Posterior vena cava (tissue), 2 donors: ENCODE measurements at regions of chr14 and their contacts with region 1.

Region 1: GRCh38 chr14:76272774-76273173 is 103.2 kb upstream of the ESRRB start:
- DNase-seq: no peak

Region 2: DNA sequence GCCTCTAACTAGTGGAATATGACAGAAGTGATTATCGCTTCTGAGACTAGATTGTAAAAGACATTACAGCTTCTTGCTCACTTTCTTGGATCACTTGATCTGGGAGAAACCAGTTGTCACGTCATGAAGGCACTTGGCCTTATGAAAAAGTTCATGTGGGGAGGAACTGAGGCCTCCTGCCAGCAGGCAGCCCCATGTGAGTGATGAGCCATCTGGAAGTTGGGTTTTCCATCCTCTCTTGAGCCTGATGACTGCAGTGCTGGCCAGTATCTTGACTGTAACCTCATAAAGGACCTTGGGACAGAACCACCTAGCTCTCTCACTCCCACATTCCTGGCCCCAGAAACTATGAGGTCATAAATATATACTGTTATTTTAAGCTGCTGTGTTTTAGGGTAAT is 583.8 kb before region 1 on chr14:
- intact Hi-C with region 1: no loop called
- DNase-seq: peak; percentile 86

Region 3: DNA sequence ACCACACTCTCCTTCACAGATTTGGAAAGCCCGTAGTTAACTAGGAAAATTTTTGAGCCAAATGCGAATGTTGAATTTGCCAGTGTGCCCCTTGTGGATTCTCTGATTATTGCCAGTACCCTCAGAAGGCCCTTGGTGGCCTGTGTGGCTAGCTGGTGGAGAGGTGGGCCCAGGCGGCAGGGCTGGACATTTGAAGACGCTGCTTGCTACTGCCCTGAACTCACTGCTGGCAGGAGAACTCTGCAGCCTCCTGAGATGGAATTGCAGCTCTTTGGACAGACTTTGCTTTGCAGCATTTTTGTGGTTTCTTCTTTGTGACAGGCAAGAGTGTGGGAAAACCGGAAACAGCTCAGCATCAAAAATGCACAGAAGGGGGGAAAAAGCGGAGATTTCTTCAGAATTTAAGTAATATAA is 388.6 kb before region 1 on chr14:
- intact Hi-C with region 1: no loop called
- DNase-seq: no peak

Region 4: GRCh38 chr14:76236172-76237130 is 36.3 kb before region 1 on chr14:
- intact Hi-C with region 1: no loop called
- DNase-seq: no peak

Region 5: DNA sequence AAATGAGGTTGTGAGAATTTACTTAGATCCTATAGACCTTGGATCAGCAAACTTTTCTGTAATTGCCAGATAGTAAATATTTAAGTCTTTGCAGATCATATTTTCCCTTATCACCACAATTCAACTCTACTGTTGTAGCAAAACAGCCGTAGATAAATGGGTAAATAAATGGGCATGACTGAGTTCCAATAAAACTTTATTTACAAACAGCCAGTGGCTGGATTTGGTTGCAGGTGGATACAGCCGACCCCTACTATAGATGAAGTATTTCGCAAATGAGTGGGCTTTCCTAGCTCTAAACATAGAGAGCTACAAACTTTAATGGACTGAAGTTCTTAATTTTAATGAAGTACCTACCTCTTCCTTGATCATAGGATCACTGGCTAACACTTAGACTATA is 20.3 kb before region 1 on chr14:
- intact Hi-C with region 1: loop called in 1 of 2 experiments (anchors 1 kb)
- DNase-seq: no peak

Region 6: DNA sequence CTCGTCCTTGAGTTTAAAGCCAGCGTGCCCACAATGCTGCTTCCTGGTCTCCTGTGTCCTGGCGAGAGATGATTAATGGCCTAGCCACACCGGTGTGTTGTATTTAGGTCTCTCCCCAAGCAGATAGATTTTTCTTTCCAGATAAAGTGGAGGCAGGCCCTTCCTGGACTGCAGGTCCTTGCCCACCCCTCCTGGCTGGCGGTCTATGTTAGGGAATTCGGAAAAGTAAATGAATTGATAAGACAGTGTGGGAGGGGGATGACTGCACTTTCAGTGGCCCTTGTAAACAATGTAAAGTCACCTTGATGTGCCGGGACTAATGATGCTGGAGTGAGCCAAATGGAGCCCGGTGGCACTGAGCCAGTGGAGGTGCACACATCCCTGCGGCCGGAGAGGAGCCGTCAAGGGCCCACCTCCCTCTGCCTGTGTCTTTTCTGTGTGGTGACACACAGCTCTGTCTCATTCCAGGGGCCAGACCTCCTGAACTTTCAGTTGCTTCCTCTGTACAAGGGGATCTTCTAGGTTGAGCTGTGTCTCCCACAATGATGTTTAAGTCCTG is 32.6 kb after region 1 on chr14:
- intact Hi-C with region 1: loop called in 1 of 2 experiments (anchors 1 kb)
- DNase-seq: no peak